Transverse colon (tissue), 4 donors: ENCODE measurements at regions of chr5 and their contacts with region 1.

Region 1: DNA sequence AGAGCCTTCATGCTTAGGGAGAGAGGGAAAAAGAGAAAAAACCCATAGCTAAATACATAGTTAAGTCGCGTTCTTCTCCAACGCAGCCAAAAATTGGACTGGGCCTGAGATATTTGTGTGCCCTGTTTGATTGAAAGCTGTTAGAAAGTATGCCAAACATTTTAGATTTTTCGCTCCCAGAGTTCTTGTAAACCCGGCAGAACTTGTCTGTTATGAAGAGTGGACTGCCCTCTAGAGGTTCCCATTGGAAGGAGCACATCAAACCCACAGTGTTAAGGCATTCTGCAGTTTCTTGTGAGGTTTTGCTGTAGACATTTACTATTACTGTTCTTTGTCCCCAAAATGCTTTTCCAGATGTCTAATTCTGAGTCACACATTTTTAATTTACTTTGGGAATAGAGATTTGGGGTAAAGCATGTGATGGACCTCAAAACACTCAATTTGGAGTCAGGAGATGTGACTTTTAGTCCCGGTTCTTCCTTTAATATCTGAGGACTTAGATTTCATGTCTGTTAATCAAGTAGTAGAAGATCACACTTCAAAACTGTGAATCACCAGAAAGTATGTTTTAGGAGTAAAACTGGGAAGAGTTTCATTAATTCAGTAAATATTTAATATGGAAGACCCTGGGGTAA is 96.6 kb downstream of the PCSK1 start:
- DNase-seq: peak; percentile 79
- H3K4me3 ChIP-seq: no peak overlapping the region
- H3K27ac ChIP-seq: peak overlapping the region in 3 of 4 donors; percentile 6 to 28 (median 9)
- H3K4me1 ChIP-seq: peaks cover 0 to 41% (median 19%) of the 10 kb centered on the region in 4 donors
- H3K27me3 ChIP-seq: no peaks in the 10 kb centered on the region
- CTCF ChIP-seq: peak; percentile 79 to 91 (median 86)
- EP300 ChIP-seq: no peak
- POLR2A ChIP-seq: no peak

Region 2: GRCh38 chr5:95631991-95632675 is 704.3 kb before region 1 on chr5:
- in situ Hi-C with region 1: loop called in 1 of 4 experiments (anchors 25 kb)
- intact Hi-C with region 1: loop called (anchors 10 kb)
- DNase-seq: peak; percentile 13
- H3K4me3 ChIP-seq: no peak overlapping the region
- H3K27ac ChIP-seq: no peak overlapping the region
- H3K4me1 ChIP-seq: peaks cover 4 to 18% (median 12%) of the 10 kb centered on the region in 4 donors
- H3K27me3 ChIP-seq: no peaks in the 10 kb centered on the region
- CTCF ChIP-seq: no peak
- EP300 ChIP-seq: no peak
- POLR2A ChIP-seq: no peak

Region 3: GRCh38 chr5:95646554-95647431 is 689.7 kb before region 1 on chr5 and contains the start of gene RFESD:
- in situ Hi-C with region 1: loop called in 1 of 4 experiments (anchors 25 kb)
- intact Hi-C with region 1: no loop called
- DNase-seq: peak; percentile 100
- H3K4me3 ChIP-seq: peak within 1 kb of the TSS; percentile 31 to 63 (median 40)
- H3K27ac ChIP-seq: peak within 1 kb of the TSS; percentile 96 to 98 (median 97)
- H3K4me1 ChIP-seq: peaks cover 10 to 27% (median 16%) of the 10 kb centered on the region in 4 donors
- H3K27me3 ChIP-seq: no peaks in the 10 kb centered on the region
- CTCF ChIP-seq: peak in 3 of 5 experiments; percentile 25 to 50 (median 44)
- EP300 ChIP-seq: peak; percentile 100
- POLR2A ChIP-seq: peak; percentile 97
- total RNA-seq, gene RFESD: 1.1 to 1.4 TPM in 2 of 4 donors, not detected in the others

Region 4: GRCh38 chr5:95961617-95962474 is 374.6 kb before region 1 on chr5 and contains the start of gene ELL2:
- in situ Hi-C with region 1: loop called in 1 of 4 experiments (anchors 25 kb)
- intact Hi-C with region 1: loop called (anchors 10 kb)
- DNase-seq: peak; percentile 100
- H3K4me3 ChIP-seq: peak within 1 kb of the TSS; percentile 86 to 95 (median 93)
- H3K27ac ChIP-seq: peak within 1 kb of the TSS; percentile 98 to 100 (median 99)
- H3K4me1 ChIP-seq: peaks cover 3 to 40% (median 25%) of the 10 kb centered on the region in 4 donors
- H3K27me3 ChIP-seq: no peaks in the 10 kb centered on the region
- CTCF ChIP-seq: no peak
- EP300 ChIP-seq: peak; percentile 99
- POLR2A ChIP-seq: peak; percentile 98
- total RNA-seq, gene ELL2: 5.8 to 46.8 (median 19.7) TPM